Gastrocnemius medialis (tissue), 4 donors: ENCODE measurements at regions of chr2 and their contacts with region 1.

Region 1: GRCh38 chr2:219597552-219598307 is at the start of gene STK11IP:
- DNase-seq: peak; percentile 95 to 97
- ATAC-seq: peak; percentile 95 to 98
- H3K4me3 ChIP-seq: peak within 1 kb of the TSS; percentile 73 to 91 (median 84)
- H3K27ac ChIP-seq: peak within 1 kb of the TSS; percentile 88 to 96 (median 92)
- H3K4me1 ChIP-seq: peaks cover 12 to 16% of the 10 kb centered on the region in 2 donors
- H3K27me3 ChIP-seq: no peaks in the 10 kb centered on the region
- CTCF ChIP-seq: no peak
- POLR2A ChIP-seq: peak; percentile 51
- total RNA-seq, gene STK11IP: 5.4 to 7.5 (median 6.5) TPM

Region 2: GRCh38 chr2:219245148-219245898 is 352.4 kb before region 1 on chr2 and contains the starts of genes GLB1L and STK16:
- in situ Hi-C with region 1: no loop called
- intact Hi-C with region 1: loop called (anchors 5 kb)
- DNase-seq: peak; percentile 85 to 91
- ATAC-seq: peak; percentile 89 to 90
- H3K4me3 ChIP-seq: peak within 1 kb of the TSS; percentile 65 to 98 (median 82)
- H3K27ac ChIP-seq: peak within 1 kb of the TSS; percentile 83 to 99 (median 96)
- H3K4me1 ChIP-seq: peaks cover 43 to 47% of the 10 kb centered on the region in 2 donors
- H3K27me3 ChIP-seq: no peaks in the 10 kb centered on the region
- CTCF ChIP-seq: no peak
- POLR2A ChIP-seq: peak; percentile 76 to 89
- total RNA-seq, gene GLB1L: 1.0 to 3.6 (median 1.3) TPM
- total RNA-seq, gene STK16: 4.4 to 19.3 (median 14.2) TPM

Region 3: DNA sequence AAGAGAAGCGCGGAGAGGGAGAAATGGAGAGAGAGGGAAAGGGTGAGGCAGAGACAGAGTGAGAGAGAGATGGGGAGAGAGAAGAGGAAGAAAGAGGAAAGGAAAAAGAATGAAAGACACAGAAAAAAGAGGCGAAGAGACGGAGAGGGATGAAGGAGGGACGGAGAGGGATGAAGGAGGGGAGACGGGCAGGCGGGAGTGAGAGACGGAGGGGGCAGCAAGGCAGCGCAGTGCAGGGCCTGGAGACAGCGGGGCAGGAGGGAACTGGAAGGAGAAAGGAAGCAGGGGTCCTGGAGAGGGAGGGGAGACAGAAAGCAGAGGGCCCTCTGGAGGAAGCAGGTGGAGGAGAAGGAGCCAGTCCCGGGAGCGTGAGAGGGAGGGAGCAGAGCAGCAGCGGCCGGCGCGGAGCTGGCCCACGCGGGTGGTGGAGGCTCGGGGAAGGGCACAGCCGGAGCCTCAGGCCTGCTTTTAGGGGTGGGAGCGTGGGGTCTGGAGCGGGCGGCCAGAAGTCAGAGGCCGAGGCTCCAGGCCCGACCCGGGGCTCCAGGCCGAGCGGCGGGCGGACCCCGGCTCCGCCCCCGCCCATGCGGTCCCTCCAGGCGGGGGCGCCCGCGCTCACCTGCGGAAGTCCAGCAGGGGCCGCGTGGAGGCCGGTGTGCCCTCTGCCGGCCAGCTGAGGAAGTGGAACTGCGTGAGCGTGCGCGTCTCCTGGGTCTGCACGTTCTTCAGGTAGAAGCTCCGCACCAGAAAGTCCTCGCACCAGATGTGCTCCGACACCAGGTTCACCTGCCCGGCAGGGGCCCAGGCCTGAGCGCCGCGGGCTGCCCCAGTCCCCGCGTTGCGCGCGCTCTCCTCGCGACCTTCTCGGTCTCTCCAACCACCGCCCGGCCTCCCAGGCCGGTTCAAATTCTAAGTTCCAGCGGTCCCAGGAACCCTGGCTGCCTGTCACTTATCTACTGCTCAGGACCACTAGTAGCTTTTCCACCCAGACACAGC is 303.1 kb before region 1 on chr2:
- in situ Hi-C with region 1: no loop called
- intact Hi-C with region 1: no loop called
- DNase-seq: peak; percentile 64 to 80
- ATAC-seq: peak; percentile 85 to 86
- H3K4me3 ChIP-seq: peak overlapping the region; percentile 57 to 63 (median 58)
- H3K27ac ChIP-seq: peak overlapping the region; percentile 68 to 82 (median 77)
- H3K4me1 ChIP-seq: peaks cover 8 to 10% of the 10 kb centered on the region in 2 donors
- H3K27me3 ChIP-seq: no peaks in the 10 kb centered on the region
- CTCF ChIP-seq: peak; percentile 95 to 99 (median 98)
- POLR2A ChIP-seq: peak in 1 of 2 donors; percentile 30

Region 4: DNA sequence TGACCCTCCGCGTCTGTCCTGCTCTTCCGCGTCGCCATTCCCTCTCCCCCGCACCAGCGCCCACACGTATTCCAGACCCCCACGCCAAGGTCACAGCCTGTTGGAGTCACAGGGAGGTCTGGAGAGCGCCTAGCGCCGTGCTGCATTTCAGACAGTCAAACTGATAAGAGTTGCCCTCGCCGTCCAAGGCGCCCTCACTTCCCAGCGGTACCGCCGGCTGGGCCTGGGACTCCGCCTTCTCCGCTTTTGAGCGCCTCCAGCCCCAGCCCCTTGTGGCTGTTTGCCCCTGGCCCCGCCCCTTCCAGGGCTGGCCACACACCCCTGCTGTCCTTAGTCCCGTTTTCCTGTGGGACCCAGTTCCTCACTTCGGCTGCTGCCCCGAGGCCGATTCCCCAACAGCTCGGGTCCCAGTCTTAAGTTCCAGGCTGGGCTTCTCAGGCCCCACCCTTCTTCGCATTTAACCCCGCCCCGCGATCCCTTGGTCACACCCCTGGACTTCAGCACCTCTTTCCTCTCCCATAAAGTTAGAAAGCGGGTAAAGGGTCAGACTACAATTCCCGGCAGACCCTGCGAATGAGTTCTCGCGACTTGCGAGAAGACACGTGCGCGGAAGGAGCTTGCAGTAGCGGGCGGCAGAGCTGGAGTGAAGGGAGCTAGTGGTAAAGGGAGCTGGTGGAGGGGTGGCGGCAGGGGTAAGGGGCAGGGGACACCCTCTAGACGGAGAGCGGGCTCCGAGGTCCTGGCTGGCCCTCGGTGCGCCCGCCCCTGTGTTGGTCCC is 99.3 kb before region 1 on chr2 and contains the start of gene GMPPA:
- in situ Hi-C with region 1: no loop called
- intact Hi-C with region 1: loop called (anchors 5 kb)
- DNase-seq: peak; percentile 97 to 98
- ATAC-seq: peak; percentile 82 to 88
- H3K4me3 ChIP-seq: peak within 1 kb of the TSS; percentile 66 to 87 (median 74)
- H3K27ac ChIP-seq: peak within 1 kb of the TSS; percentile 91 to 100 (median 96)
- H3K4me1 ChIP-seq: peaks cover 39 to 46% of the 10 kb centered on the region in 2 donors
- H3K27me3 ChIP-seq: no peaks in the 10 kb centered on the region
- CTCF ChIP-seq: peak in 1 of 5 experiments; percentile 25
- POLR2A ChIP-seq: peak; percentile 83 to 89
- total RNA-seq, gene GMPPA: 18.0 to 25.8 (median 24.4) TPM

Region 5: GRCh38 chr2:219530048-219530963 is 67.4 kb before region 1 on chr2:
- in situ Hi-C with region 1: no loop called
- intact Hi-C with region 1: no loop called
- DNase-seq: peak; percentile 74 to 76
- ATAC-seq: peak; percentile 91 to 96
- H3K4me3 ChIP-seq: peak overlapping the region in 1 of 4 donors; percentile 40
- H3K27ac ChIP-seq: no peak overlapping the region
- H3K4me1 ChIP-seq: no peaks in the 10 kb centered on the region
- H3K27me3 ChIP-seq: peaks cover 0 to 2% (median 0%) of the 10 kb centered on the region in 3 donors
- CTCF ChIP-seq: peak; percentile 97 to 99 (median 98)
- POLR2A ChIP-seq: no peak

Region 6: DNA sequence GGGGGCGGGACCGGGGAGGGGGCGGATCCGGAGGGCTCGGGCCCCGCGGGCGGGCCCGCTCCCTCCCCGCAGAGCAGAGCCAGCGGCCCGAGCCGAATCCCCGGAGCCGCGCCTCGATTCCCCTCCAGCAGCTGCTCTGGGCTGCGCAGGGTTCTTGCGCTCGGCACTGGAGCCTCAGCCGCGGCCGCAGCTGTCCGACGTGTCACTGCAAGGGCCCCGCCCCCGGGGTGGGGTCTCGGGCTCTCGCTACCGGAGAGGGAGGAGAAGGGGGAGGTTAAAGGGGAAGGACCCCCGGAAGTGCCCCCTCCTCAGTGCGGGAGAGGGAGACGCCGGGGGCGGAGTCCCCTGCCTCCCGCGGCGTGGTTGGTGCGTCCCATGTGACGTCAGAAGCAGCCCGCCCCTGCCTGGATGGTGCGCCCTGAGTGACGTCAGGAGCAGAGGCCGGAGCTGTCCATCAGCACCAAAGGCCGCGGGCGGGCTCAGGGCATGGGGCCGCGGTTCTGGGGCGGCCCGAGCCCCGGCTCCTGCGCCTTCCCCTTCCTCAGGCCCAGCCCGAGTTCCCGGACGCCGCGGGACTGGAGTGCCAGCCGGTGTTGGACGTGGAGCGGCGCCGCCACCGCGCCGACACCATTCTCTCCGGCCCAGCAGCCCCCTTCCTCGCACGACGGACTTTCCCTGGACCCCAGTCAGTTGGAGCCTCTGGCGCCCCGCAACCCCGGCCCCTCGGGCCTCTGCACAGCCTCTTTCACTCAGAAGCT is 54.0 kb before region 1 on chr2 and contains the starts of genes CHPF and TMEM198:
- in situ Hi-C with region 1: no loop called
- intact Hi-C with region 1: loop called (anchors 2 kb)
- DNase-seq: peak; percentile 96 to 98
- ATAC-seq: peak; percentile 87 to 90
- H3K4me3 ChIP-seq: peak within 1 kb of the TSS; percentile 63 to 79 (median 74)
- H3K27ac ChIP-seq: peak within 1 kb of the TSS; percentile 75 to 96 (median 88)
- H3K4me1 ChIP-seq: peaks cover 18 to 23% of the 10 kb centered on the region in 2 donors
- H3K27me3 ChIP-seq: no peaks in the 10 kb centered on the region
- CTCF ChIP-seq: no peak
- POLR2A ChIP-seq: peak; percentile 71 to 89
- total RNA-seq, gene CHPF: 21.0 to 50.5 (median 37.2) TPM
- total RNA-seq, gene TMEM198: 0.87 to 6.7 (median 3.3) TPM

Region 7: GRCh38 chr2:219571311-219572236 is 26.2 kb before region 1 on chr2 and contains the start of gene OBSL1:
- in situ Hi-C with region 1: no loop called
- intact Hi-C with region 1: loop called (anchors 1 kb)
- DNase-seq: peak; percentile 69 to 89
- ATAC-seq: peak; percentile 80
- H3K4me3 ChIP-seq: peak within 1 kb of the TSS; percentile 56 to 73 (median 63)
- H3K27ac ChIP-seq: peak within 1 kb of the TSS; percentile 79 to 90 (median 86)
- H3K4me1 ChIP-seq: peaks cover 11 to 14% of the 10 kb centered on the region in 2 donors
- H3K27me3 ChIP-seq: no peaks in the 10 kb centered on the region
- CTCF ChIP-seq: no peak
- POLR2A ChIP-seq: peak; percentile 24 to 70
- total RNA-seq, gene OBSL1: 47.9 to 72.9 (median 56.5) TPM

Region 8: GRCh38 chr2:219642465-219643080 is 44.8 kb after region 1 on chr2:
- in situ Hi-C with region 1: no loop called
- intact Hi-C with region 1: loop called (anchors 1 kb)
- DNase-seq: peak; percentile 92 to 94
- ATAC-seq: peak; percentile 84 to 86
- H3K4me3 ChIP-seq: no peak overlapping the region
- H3K27ac ChIP-seq: no peak overlapping the region
- H3K4me1 ChIP-seq: peaks cover 27 to 40% of the 10 kb centered on the region in 2 donors
- H3K27me3 ChIP-seq: no peaks in the 10 kb centered on the region
- CTCF ChIP-seq: peak; percentile 96 to 100 (median 99)
- POLR2A ChIP-seq: no peak